Uterus (tissue), 4 donors: ENCODE measurements at regions of chr2 and their contacts with region 1.

Region 1: GRCh38 chr2:231925303-231926179 is 655 bp downstream of the NPPC start:
- DNase-seq: peak; percentile 73 to 84
- H3K4me3 ChIP-seq: peak overlapping the region in 1 of 2 donors; percentile 32
- H3K27ac ChIP-seq: no peak overlapping the region
- H3K4me1 ChIP-seq: peaks cover 0 to 13% of the 10 kb centered on the region in 2 donors
- H3K27me3 ChIP-seq: peaks cover 0 to 3% of the 10 kb centered on the region in 2 donors
- CTCF ChIP-seq: peak; percentile 73 to 90 (median 87)
- POLR2A ChIP-seq: peak in 1 of 2 donors; percentile 11

Region 2: DNA sequence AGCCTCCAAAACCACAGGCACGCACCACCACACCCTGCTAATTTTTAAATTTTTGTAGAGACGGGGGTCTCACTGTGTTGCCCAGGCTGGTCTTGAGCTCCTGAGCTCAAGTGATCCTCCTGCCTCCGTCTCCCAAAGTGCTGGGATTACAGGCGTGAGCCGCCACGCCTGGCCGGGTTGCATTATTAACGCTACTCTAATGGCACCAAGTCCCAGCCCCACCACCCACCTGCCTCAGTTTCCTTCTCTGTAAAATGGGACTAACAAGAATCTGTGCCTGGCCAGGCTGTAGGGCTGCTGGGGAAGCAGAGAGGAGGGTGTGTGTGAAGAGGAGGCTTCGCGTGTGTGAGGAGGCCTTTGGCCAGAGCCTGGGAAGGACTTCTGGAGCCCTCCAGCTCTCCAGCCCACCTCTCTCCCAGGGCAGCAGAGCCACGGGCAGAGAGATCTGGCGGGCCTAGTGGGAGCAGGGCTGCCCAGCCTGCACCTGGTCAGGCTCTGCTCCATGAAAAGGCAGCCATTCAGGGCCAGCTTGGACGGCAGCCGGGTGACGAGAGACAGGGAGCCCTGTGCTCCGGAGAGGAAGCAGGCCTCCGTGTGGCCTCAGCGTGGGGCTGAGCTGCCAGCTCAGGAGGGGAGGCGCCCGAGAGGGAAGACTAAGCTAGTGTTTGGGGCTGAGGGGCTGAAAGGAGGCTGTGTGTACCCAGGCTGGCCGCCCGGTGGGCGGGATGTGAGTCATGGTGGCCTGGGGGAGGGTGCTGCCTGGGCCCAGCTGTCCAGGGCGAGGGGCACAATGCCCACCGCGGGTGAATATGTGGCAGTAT is 537.4 kb before region 1 on chr2:
- intact Hi-C with region 1: no loop called
- DNase-seq: peak in 1 of 2 donors; percentile 40
- H3K4me3 ChIP-seq: no peak overlapping the region
- H3K27ac ChIP-seq: no peak overlapping the region
- H3K4me1 ChIP-seq: no peaks in the 10 kb centered on the region
- H3K27me3 ChIP-seq: no peaks in the 10 kb centered on the region
- CTCF ChIP-seq: no peak
- POLR2A ChIP-seq: no peak

Region 3: GRCh38 chr2:231530091-231531011 is 395.2 kb before region 1 on chr2 and contains the start of gene NMUR1:
- intact Hi-C with region 1: no loop called
- DNase-seq: peak; percentile 31 to 51
- H3K4me3 ChIP-seq: peak within 1 kb of the TSS in 1 of 2 donors; percentile 19
- H3K27ac ChIP-seq: no peak within 1 kb of the TSS
- H3K4me1 ChIP-seq: no peaks in the 10 kb centered on the region
- H3K27me3 ChIP-seq: peaks cover 0 to 3% of the 10 kb centered on the region in 2 donors
- CTCF ChIP-seq: peak; percentile 45 to 80 (median 73)
- POLR2A ChIP-seq: no peak
- total RNA-seq, gene NMUR1: 0.41 to 0.67 TPM in 2 of 4 donors, not detected in the others

Region 4: DNA sequence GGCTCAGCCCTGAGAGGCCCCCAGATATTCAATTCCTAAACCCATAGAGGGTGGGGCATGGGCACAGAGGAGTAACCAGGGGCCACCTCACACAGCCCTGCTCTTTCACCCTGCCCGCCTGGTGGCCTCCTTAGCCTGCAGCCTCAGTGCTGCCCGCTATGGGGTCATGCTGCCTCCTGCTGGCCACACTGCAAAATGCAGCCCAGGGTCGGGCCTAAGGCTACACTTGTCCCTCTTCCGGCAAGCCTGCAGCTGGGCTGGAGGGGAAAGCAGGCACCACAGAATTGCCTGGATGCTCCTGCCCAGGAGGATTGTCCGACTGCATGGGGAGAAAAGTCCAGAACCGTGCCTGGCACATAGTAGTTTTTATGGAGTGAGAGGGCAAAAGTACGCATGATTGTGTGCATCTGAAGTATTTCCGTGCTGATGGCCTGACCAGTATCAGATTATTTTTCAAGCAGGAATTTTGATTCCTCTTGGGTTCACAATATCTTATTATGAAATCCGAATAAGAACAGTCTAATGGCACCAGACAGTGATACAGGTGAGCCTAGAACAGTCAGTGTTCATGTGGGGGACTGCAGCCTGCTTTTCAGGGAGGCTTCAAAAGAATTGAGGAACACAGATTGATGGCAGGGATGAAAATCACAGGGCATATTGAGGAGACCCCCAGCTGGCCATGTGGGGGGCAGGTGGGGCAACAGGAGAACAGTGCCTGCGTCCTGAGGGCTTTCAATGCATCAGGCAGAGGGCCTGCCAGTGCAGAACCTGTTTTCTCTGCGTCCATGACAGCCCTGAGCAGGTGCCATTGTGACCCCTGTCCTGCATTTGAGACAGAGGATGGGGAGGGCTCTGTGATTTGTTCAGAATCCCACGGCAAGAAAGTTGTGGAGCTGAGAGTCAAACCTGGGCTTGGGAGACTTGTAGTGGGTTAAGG is 401.8 kb after region 1 on chr2:
- intact Hi-C with region 1: loop called (anchors 10 kb)
- DNase-seq: peak in 1 of 2 donors; percentile 64
- H3K4me3 ChIP-seq: no peak overlapping the region
- H3K27ac ChIP-seq: no peak overlapping the region
- H3K4me1 ChIP-seq: no peaks in the 10 kb centered on the region
- H3K27me3 ChIP-seq: no peaks in the 10 kb centered on the region
- CTCF ChIP-seq: peak; percentile 53 to 77 (median 64)
- POLR2A ChIP-seq: no peak